Naive thymus-derived CD8-positive, alpha-beta T cell (primary cell): ENCODE measurements at regions of chr7 and their contacts with region 1.

Region 1: GRCh38 chr7:99386584-99387238 is 12.2 kb downstream of the ARPC1B start:
- DNase-seq: peak in 5 of 10 donors; percentile 48 to 73 (median 53)
- ATAC-seq: peak; percentile 74 to 87
- H3K4me3 Mint-ChIP-seq: peak overlapping the region in 1 of 10 donors; percentile 29
- H3K27ac Mint-ChIP-seq: peak overlapping the region; percentile 59 to 93 (median 84)
- H3K4me1 Mint-ChIP-seq: peaks cover 11 to 38% (median 27%) of the 10 kb centered on the region in 4 donors
- H3K27me3 Mint-ChIP-seq: no peaks in the 10 kb centered on the region

Region 2: DNA sequence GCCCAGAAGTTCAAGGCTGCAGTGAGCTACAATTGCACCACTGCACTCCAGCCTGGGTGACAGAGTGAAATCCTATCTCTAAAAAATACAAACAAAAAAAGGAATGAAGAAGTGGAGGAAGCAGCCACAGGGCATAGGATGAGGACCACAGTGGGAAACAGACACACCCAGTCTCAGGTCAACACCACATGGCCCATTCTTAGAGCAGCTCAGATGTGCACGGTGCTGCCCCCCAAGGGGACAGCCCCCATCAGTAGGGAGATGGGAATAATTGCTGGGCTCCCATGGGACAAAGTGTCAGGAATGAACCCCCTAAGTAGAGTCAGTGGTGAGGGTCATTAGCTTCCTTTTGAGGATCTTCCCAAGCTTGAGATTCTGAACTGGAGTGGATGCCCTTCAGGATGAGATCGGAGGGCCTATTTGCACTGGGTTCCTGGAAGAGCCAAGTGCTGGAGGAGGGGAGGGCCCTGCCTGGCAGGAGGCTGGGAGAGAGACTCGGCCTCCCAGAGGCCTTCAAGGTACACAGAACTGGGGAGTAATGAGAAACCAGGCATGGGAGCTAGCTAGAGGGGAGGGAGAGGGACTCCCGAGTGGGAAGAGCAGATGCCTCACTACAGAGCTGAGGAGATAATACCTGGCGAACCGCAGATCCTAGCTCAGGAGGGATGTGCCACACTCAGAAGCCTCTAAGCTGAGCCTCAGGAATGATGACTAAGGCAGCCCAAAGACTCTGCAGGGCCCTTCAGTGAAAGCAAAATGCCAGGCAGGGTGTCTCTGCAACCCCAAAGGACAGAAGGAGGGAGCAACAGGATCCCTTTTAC is 12.1 kb after region 1 on chr7:
- POLR2A ChIA-PET with region 1: interaction called, 29 read pairs
- DNase-seq: no peak
- ATAC-seq: peak in 1 of 2 donors; percentile 12
- H3K4me3 Mint-ChIP-seq: no peak overlapping the region
- H3K27ac Mint-ChIP-seq: peak overlapping the region; percentile 36 to 88 (median 70)
- H3K4me1 Mint-ChIP-seq: peaks cover 17 to 42% (median 27%) of the 10 kb centered on the region in 4 donors
- H3K27me3 Mint-ChIP-seq: no peaks in the 10 kb centered on the region